ENCODE measurements at regions of chr7 and their contacts with region 1.

Region 1: GRCh38 chr7:106166655-106167342 is 54.7 kb upstream of the SYPL1 start:
- DNase-seq: peak; percentile 94
- ATAC-seq: peak; percentile 79
- H3K4me3 ChIP-seq: no peak overlapping the region
- H3K27ac ChIP-seq: no peak overlapping the region
- H3K4me1 ChIP-seq: no peaks in the 10 kb centered on the region; the same call in 1 of the 2 replicates
- H3K27me3 ChIP-seq: no peaks in the 10 kb centered on the region
- CTCF ChIP-seq: peak; percentile 96

Region 2: DNA sequence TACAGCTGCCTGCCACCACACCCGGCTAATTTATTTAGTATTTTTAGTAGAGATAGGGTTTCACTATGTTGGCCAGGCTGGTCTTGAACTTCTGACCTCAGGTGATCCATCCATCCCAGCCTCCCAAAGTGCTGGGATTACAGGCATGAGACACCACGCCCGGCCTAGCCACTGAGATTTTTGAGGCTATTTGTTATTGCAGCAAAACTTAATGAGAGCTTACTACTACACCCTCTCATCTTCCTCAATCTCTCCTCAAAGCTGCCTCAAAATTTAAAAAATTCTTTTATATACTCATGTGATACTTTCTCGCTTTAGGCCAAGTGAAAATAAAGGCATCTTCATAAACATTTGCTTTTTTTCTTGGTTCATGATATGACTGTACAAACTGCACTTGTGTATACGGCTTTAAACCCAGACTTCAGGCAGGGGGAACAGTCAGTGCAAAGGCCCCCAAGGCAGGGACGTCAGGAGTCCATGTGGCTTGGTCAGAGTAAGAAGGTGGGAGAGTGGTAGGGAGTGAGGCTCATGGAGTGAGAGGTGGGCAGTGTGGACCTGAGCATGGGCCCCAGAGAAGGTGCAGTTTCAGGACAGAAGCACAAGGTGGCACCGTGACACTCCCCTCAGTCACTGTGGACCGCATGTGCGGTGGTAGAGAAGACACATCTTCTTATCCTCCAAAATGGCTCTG is 110.1 kb before region 1 on chr7:
- CTCF ChIA-PET with region 1: no interaction called
- POLR2A ChIA-PET with region 1: no interaction called
- intact Hi-C with region 1: loop called (anchors 1 kb)
- DNase-seq: peak; percentile 92
- ATAC-seq: peak; percentile 95
- H3K4me3 ChIP-seq: no peak overlapping the region
- H3K27ac ChIP-seq: no peak overlapping the region
- H3K4me1 ChIP-seq: peaks cover 21% of the 10 kb centered on the region
- H3K27me3 ChIP-seq: no peaks in the 10 kb centered on the region
- CTCF ChIP-seq: peak; percentile 98